ENCODE measurements at regions of chr1 and their contacts with region 1.

Region 1: DNA sequence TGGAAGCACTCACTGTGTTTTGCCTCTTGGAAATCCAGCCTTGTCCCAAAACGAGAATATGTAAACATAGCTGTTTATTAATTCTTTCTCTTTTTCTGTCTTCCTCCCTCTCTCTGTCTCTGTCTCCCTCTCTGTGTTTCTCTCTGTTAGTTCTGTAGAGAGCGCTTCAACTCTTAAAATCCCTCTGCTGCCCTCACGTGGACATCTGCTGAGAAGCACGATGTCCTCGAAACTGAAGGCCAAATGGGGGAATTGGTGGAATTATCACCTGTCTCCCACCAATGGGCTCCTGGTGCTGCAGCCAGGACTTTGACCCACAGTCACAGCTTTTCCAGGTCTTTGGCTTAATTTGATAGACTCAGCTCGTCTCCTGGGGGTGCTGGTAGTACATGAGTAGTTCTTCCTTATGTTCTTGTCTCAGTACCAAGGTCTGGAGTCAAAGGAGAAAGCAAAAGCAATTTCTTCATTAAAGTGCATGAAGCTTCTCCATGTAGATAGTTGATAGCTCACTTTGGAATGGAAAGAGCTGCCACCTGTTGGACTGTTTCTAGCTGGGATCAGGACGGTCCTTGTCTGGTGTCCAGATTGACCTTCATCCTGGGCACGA is 5.5 kb upstream of the GBP6 start:
- DNase-seq: peak; percentile 90
- ATAC-seq: peak; percentile 85
- H3K4me3 Mint-ChIP-seq: peak overlapping the region; percentile 39
- H3K27ac Mint-ChIP-seq: peak overlapping the region; percentile 4
- H3K4me1 Mint-ChIP-seq: peaks cover 57% of the 10 kb centered on the region
- H3K27me3 Mint-ChIP-seq: no peaks in the 10 kb centered on the region

Region 2: DNA sequence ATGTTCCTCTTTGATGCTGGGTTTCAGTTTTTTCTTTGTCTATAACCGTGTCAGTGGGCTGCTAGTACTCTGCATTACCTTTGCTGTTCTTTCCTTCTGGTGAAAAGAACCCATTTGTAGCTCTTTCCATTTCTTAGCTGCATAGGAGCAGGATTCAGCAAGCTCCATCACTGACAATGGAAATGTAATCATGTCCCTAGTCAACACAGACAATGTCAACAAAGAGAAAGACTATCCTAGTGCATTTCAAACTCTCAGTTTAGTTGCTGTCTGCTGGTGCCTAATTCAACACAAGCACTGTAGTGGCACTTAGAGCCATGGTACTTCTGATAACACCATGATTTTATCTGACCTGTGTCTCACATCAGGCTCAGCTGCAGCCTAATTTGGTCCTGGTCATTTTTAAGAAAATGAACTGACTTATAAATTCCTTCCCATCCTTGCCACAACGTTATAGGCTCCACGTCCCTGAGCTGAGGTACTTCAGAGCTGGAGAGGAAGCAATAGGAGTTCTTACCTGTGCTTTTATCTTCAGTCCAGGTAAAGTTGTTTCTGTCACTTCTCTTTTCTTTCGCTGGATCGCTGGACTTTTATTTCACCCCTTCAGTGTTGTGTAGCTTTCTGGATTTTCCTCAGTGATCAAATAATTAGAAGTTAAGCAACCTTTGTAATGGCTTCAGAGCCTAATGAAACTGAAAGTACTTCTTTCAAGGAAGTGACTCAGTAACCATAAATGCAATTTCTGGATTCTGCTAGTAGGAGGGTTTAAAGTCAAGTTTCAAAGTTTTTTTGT is 336.0 kb before region 1 on chr1 and contains the start of gene GBP3:
- CTCF ChIA-PET with region 1: interaction called, 14 read pairs
- POLR2A ChIA-PET with region 1: interaction called, 4 read pairs
- DNase-seq: peak; percentile 37
- ATAC-seq: peak; percentile 79
- H3K4me3 Mint-ChIP-seq: peak within 1 kb of the TSS; percentile 79
- H3K27ac Mint-ChIP-seq: peak within 1 kb of the TSS; percentile 82
- H3K4me1 Mint-ChIP-seq: peaks cover 43% of the 10 kb centered on the region
- H3K27me3 Mint-ChIP-seq: no peaks in the 10 kb centered on the region
- total RNA-seq, gene GBP3: 16.7 to 18.9 TPM

Region 3: DNA sequence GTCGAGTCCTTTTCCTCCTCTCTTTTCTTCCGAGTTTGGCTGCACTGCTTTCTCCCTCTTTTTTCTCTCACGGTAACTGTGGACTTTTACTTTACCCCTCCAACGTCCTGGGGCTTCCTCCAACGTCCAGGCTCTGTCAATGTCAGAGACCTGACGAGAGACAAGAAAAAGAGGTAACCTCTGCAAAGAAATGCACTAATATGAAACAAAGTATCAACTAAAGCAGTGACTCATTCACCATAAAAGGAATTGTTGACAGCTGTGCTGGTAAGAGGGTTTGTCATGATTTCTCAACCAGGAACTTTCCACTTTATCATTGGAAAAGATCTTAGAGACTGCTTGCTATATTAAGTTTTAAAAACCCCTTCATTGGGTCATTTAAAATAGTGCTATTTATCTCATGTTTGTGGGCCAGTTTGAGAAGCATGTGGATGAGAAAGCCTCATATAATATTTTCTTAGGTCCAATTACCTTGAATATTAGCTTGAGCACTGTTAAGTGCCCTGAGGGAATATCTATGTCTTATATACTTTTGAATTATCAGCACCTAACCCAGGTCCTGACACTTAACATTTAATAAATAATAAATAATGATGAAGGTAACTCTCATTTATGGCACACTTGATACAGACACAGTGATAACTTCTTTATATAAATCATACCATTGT is 232.3 kb before region 1 on chr1 and contains the start of gene GBP2:
- CTCF ChIA-PET with region 1: interaction called, 17 read pairs
- POLR2A ChIA-PET with region 1: interaction called, 6 read pairs
- DNase-seq: peak; percentile 35
- ATAC-seq: peak; percentile 70
- H3K4me3 Mint-ChIP-seq: peak within 1 kb of the TSS; percentile 93
- H3K27ac Mint-ChIP-seq: peak within 1 kb of the TSS; percentile 99
- H3K4me1 Mint-ChIP-seq: peaks cover 62% of the 10 kb centered on the region
- H3K27me3 Mint-ChIP-seq: no peaks in the 10 kb centered on the region
- total RNA-seq, gene GBP2: 95.8 to 97.4 TPM

Region 4: GRCh38 chr1:89261926-89262515 is 96.4 kb before region 1 on chr1:
- CTCF ChIA-PET with region 1: interaction called, 54 read pairs
- POLR2A ChIA-PET with region 1: interaction called, 6 read pairs
- DNase-seq: no peak
- ATAC-seq: no peak
- H3K4me3 Mint-ChIP-seq: peak overlapping the region; percentile 65
- H3K27ac Mint-ChIP-seq: peak overlapping the region; percentile 40
- H3K4me1 Mint-ChIP-seq: peaks cover 79% of the 10 kb centered on the region
- H3K27me3 Mint-ChIP-seq: no peaks in the 10 kb centered on the region

Region 5: GRCh38 chr1:89286549-89287180 is 71.7 kb before region 1 on chr1:
- CTCF ChIA-PET with region 1: interaction called, 13 read pairs
- POLR2A ChIA-PET with region 1: interaction called, 7 read pairs
- DNase-seq: peak; percentile 50
- ATAC-seq: peak; percentile 84
- H3K4me3 Mint-ChIP-seq: peak overlapping the region; percentile 31
- H3K27ac Mint-ChIP-seq: peak overlapping the region; percentile 88
- H3K4me1 Mint-ChIP-seq: peaks cover 82% of the 10 kb centered on the region
- H3K27me3 Mint-ChIP-seq: no peaks in the 10 kb centered on the region

Region 6: DNA sequence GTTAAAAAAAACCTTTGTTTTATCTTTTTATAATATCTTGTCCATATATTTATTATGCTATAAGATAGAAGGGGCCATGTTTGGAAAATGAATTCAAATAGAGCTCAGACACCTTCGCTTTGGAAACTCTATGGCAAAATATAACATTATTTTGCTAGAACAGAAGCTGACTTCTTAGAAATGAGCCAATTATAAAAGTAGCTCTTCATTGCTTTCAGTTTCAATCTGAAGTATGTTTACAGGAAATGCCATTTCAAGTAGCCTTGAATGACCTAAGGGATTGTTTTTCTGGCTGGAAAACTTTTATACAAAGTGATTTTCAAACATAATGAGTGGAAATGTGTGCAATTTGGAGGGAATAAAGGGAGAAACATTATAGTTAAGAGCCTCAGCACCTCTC is 47.9 kb before region 1 on chr1:
- CTCF ChIA-PET with region 1: interaction called, 41 read pairs
- POLR2A ChIA-PET with region 1: no interaction called
- DNase-seq: no peak
- ATAC-seq: peak; percentile 78
- H3K4me3 Mint-ChIP-seq: peak overlapping the region; percentile 60
- H3K27ac Mint-ChIP-seq: peak overlapping the region; percentile 93
- H3K4me1 Mint-ChIP-seq: peaks cover 57% of the 10 kb centered on the region
- H3K27me3 Mint-ChIP-seq: no peaks in the 10 kb centered on the region

Measured in activated CD8-positive, alpha-beta T cell treated with anti-CD3 and anti-CD28 coated beads, Interleukin-2, amount 10 ng/mL, durations not matched to agents 7 days and 5 days (primary cell).